ENCODE measurements at regions of chr2 and their contacts with region 1.

Region 1: DNA sequence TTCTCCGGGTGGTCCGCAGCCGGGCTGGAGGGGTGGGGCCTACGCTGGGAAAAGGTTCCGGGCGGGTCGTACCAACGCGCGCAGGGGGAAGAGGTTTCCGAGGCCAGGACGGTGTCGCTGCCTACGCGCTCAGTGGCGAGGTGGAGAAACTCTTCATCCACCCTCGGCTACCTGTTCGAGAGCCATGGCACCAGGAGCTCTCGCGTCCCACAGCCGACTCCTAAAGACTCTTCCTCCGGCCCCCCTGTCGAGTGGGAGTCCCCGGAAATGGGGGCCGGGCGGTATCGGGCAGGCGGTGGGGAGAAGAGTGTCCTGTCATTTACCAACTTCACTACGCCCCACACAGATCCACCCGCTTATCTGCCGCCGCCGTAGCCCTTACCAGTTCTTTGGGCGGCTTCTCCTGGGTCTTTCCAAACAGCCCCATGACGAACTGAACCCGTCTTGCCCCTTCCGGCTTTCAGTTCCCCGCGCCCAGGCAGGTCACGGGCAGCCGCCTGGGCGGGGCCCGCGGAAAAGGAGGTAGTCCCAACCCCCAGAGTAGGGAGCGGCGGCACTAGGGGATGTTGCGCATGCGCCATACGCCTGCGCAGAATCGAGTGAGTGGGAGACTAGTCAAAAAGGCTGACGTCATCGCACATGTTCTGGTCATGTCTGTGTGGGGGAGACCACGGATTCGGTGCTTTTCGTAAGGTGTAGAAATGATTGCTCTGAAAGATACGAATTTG is at the start of gene CHMP3:
- DNase-seq: peak; percentile 98 to 99 (median 99)
- H3K4me3 ChIP-seq: peak within 1 kb of the TSS; percentile 57 to 98 (median 84)
- H3K4me3 Mint-ChIP-seq: peak within 1 kb of the TSS; percentile 89 to 97
- H3K27ac ChIP-seq: peak within 1 kb of the TSS; percentile 99 to 100
- H3K27ac Mint-ChIP-seq: peak within 1 kb of the TSS; percentile 99 to 100 (median 100)
- H3K4me1 ChIP-seq: peaks cover 20 to 33% of the 10 kb centered on the region in 2 donors
- H3K4me1 Mint-ChIP-seq: peaks cover 34% of the 10 kb centered on the region
- H3K27me3 ChIP-seq: no peaks in the 10 kb centered on the region
- H3K27me3 Mint-ChIP-seq: peaks cover 0 to 6% (median 2%) of the 10 kb centered on the region in 3 donors
- CTCF ChIP-seq: no peak
- polyA plus RNA-seq, gene CHMP3: 45.4 to 115 (median 99.4) TPM

Region 2: DNA sequence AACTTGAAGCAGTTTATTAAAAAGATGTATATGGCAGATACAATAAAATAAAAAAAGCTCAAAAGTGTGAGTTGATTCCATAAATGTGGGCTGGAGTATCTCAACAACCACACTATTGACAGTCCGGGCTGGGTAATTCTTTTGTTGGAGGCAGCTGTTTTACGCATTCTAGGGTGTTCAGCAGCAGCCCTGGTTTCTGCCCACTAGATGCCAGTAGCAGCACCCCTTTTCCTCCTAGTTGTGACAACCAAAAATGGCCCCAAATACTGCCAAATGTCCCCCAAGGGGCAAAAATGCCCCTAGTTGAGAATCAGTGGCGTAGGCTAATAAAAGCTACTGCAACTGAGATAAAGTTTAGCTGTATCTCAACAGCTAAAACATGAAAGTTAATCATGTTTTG is 44.6 kb before region 1 on chr2:
- intact Hi-C with region 1: no loop called
- DNase-seq: peak; percentile 3 to 10 (median 5)
- H3K4me3 ChIP-seq: no peak overlapping the region
- H3K4me3 Mint-ChIP-seq: no peak overlapping the region
- H3K27ac ChIP-seq: no peak overlapping the region
- H3K27ac Mint-ChIP-seq: peak overlapping the region in 1 of 7 donors; percentile 20
- H3K4me1 ChIP-seq: no peaks in the 10 kb centered on the region
- H3K4me1 Mint-ChIP-seq: no peaks in the 10 kb centered on the region
- H3K27me3 ChIP-seq: no peaks in the 10 kb centered on the region
- H3K27me3 Mint-ChIP-seq: no peaks in the 10 kb centered on the region
- CTCF ChIP-seq: peak; percentile 54

Region 3: GRCh38 chr2:86623651-86624541 is 60.8 kb after region 1 on chr2 and contains the start of gene RNF103:
- intact Hi-C with region 1: loop called (anchors 5 kb)
- DNase-seq: peak; percentile 83 to 85 (median 84)
- H3K4me3 ChIP-seq: peak within 1 kb of the TSS; percentile 65 to 92 (median 81)
- H3K4me3 Mint-ChIP-seq: peak within 1 kb of the TSS; percentile 94 to 99
- H3K27ac ChIP-seq: peak within 1 kb of the TSS; percentile 88 to 89
- H3K27ac Mint-ChIP-seq: peak within 1 kb of the TSS; percentile 93 to 97 (median 96)
- H3K4me1 ChIP-seq: peaks cover 22 to 25% of the 10 kb centered on the region in 2 donors
- H3K4me1 Mint-ChIP-seq: peaks cover 30% of the 10 kb centered on the region
- H3K27me3 ChIP-seq: no peaks in the 10 kb centered on the region
- H3K27me3 Mint-ChIP-seq: peaks cover 0 to 8% (median 0%) of the 10 kb centered on the region in 3 donors
- CTCF ChIP-seq: no peak
- polyA plus RNA-seq, gene RNF103: 1.0 to 31.9 (median 2.2) TPM